ENCODE measurements at regions of chr17 and their contacts with region 1.

Region 1: DNA sequence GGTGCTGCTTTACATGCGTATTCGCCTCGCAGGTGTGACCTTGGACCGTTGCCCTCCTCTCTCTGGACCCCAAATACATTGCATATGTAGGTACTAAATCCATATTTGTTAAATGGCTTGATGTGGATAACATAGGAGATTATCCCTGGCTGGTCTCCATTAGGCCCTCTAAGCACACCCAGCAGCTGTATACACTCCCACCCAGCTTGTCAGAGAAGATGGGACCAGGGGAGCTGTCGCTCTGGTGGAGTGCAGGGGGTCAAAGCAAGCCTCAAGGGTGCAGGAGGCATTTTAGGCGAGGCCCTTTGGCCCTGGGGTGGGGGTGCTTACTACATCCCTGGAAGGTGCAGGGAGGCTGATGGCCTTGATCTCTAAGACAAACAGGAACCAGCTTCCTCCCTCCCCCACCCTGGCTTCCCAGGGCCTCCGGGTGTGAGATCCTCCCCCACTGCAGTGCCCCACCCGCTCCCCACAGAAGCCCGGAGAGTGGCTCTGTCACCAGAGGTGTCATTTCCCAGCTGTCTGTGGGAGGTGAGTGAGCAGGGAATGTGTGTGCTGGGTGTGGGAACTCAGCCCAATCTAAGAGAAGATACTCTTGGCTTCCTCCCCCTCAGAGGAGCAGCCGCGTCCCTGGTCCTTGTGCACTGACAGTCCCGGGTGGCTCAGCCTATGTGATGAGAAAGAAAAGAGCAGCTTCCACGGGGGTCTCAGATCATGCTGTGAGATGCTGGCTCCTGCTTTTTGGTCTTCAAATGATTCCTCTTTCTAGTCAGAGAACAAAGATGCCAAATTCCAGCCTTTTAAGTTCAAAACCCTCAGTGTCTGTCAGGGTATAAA is 1.4 kb upstream of the VAMP2 start:
- DNase-seq: peak; percentile 38 to 80 (median 71)
- ATAC-seq: peak; percentile 68
- H3K4me3 ChIP-seq: peak overlapping the region; percentile 72
- H3K4me3 Mint-ChIP-seq: peak overlapping the region; percentile 78 to 94 (median 85)
- H3K27ac ChIP-seq: peak overlapping the region; percentile 100
- H3K27ac Mint-ChIP-seq: peak overlapping the region in 8 of 9 donors; percentile 94 to 99 (median 98)
- H3K4me1 ChIP-seq: peaks cover 35 to 46% of the 10 kb centered on the region in 2 donors
- H3K4me1 Mint-ChIP-seq: peaks cover 45 to 63% (median 55%) of the 10 kb centered on the region in 7 donors
- H3K27me3 ChIP-seq: peaks cover 0 to 3% of the 10 kb centered on the region in 2 donors
- H3K27me3 Mint-ChIP-seq: no peaks in the 10 kb centered on the region

Region 2: GRCh38 chr17:7673239-7673638 is 491.0 kb before region 1 on chr17:
- CTCF ChIA-PET with region 1: no interaction called
- POLR2A ChIA-PET with region 1: no interaction called
- intact Hi-C with region 1: no loop called
- DNase-seq: peak in 5 of 9 donors; percentile 5 to 29 (median 16)
- ATAC-seq: no peak
- H3K4me3 ChIP-seq: no peak overlapping the region
- H3K4me3 Mint-ChIP-seq: no peak overlapping the region
- H3K27ac ChIP-seq: no peak overlapping the region
- H3K27ac Mint-ChIP-seq: peak overlapping the region in 1 of 9 donors; percentile 19
- H3K4me1 ChIP-seq: no peaks in the 10 kb centered on the region
- H3K4me1 Mint-ChIP-seq: peaks cover 4 to 15% (median 8%) of the 10 kb centered on the region in 7 donors
- H3K27me3 ChIP-seq: no peaks in the 10 kb centered on the region
- H3K27me3 Mint-ChIP-seq: no peaks in the 10 kb centered on the region

Region 3: DNA sequence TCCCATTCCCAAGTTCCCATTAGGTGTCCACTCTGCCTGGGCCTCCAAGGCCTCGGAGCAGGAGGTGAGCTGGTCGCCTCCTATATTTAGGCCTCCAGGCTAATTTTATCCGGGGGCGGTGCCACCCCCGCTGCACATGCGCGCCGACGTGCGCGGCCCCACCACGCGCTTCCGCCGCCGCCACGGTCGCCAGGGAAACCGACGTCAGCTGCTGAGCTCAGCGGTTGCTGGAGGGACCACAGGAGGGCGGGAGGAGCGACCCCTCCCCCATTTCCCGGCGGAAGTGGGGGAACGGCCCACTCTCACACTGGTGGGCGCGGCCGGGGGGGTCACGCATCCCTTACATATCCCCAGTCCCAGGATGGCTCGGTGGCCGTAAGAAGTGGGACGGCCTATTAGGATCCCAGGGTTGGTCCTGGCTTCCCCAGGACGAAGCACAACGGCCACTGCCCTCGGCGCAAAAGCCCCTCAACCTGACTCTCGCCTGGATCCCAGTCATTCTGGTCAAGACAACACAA is 13.0 kb before region 1 on chr17:
- CTCF ChIA-PET with region 1: interaction called, 3 read pairs
- POLR2A ChIA-PET with region 1: interaction called, 820 read pairs
- intact Hi-C with region 1: no loop called
- DNase-seq: peak; percentile 89 to 96 (median 93)
- ATAC-seq: peak; percentile 67
- H3K4me3 ChIP-seq: peak overlapping the region; percentile 80
- H3K4me3 Mint-ChIP-seq: peak overlapping the region in 6 of 10 donors; percentile 64 to 95 (median 91)
- H3K27ac ChIP-seq: peak overlapping the region; percentile 95
- H3K27ac Mint-ChIP-seq: peak overlapping the region in 2 of 9 donors; percentile 96 to 99
- H3K4me1 ChIP-seq: peaks cover 50 to 53% of the 10 kb centered on the region in 2 donors
- H3K4me1 Mint-ChIP-seq: peaks cover 0 to 68% (median 45%) of the 10 kb centered on the region in 7 donors
- H3K27me3 ChIP-seq: no peaks in the 10 kb centered on the region
- H3K27me3 Mint-ChIP-seq: no peaks in the 10 kb centered on the region

Measured in naive thymus-derived CD4-positive, alpha-beta T cell (primary cell).